Ascending aorta (tissue), 2 donors: ENCODE measurements at regions of chr6 and their contacts with region 1.

Region 1: DNA sequence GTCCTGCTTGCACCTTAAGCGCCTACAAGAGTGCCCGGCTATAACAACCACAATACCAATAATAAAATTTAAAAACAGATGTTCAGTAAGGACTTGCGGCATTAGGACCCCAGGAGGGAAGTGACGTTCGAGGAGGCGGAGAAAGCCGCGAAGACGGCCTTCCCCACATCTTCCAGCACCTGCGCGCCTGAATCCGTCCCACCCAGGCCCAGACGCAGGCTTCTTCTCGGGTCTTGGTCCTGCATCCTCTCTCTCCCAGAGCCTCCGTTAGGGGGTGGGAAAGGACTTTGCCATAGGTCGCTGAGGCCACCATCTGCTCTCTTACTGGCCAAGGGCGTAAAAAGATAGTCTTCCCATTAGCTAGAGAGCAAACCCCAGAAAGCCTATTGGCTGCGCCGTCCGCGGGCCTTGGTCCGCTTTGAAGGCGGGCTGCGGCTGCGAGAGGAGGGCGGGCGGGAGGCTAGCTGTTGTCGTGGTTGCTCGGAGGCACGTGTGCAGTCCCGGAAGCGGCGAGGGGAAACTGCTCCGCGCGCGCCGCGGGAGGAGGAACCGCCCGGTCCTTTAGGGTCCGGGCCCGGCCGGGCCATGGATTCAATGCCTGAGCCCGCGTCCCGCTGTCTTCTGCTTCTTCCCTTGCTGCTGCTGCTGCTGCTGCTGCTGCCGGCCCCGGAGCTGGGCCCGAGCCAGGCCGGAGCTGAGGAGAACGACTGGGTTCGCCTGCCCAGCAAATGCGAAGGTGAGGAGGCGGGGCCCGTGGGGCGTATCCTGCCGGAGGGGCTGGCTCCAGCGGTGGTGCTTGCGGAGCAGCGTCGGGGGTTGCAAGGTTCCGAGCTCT is at the start of gene CNPY3:
- DNase-seq: peak; percentile 86 to 97
- H3K4me3 ChIP-seq: peak within 1 kb of the TSS; percentile 69 to 79
- H3K27ac ChIP-seq: peak within 1 kb of the TSS; percentile 81 to 87
- H3K4me1 ChIP-seq: peaks cover 0 to 12% of the 10 kb centered on the region in 2 donors
- H3K27me3 ChIP-seq: no peaks in the 10 kb centered on the region
- CTCF ChIP-seq: no peak
- total RNA-seq, gene CNPY3: 49.6 TPM

Region 2: DNA sequence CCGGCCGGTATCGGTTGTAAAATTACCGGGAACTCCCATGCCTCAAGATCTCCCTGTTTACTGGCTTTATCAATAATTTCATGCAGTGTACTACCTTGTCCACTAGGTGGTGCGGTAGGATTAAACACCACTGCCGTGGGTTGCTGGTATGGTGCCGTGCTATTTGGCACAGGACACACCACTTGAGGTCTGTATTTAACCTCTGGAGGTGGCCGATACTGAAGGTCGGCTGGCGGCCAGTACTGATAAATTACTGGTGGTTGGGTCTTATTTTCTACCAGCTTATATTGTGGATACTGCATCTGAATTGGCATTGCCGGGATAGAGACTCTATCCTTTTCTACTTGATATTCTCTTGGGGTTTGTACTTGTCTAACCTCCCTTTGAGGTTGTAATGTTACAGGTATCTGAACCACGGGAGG is 27.7 kb before region 1 on chr6:
- intact Hi-C with region 1: loop called (anchors 2 kb)
- DNase-seq: peak in 1 of 2 donors; percentile 87
- H3K4me3 ChIP-seq: no peak overlapping the region
- H3K27ac ChIP-seq: no peak overlapping the region
- H3K4me1 ChIP-seq: peaks cover 0 to 18% of the 10 kb centered on the region in 2 donors
- H3K27me3 ChIP-seq: no peaks in the 10 kb centered on the region
- CTCF ChIP-seq: peak; percentile 83 to 92 (median 88)

Region 3: GRCh38 chr6:42960243-42961019 is 31.2 kb after region 1 on chr6 and contains the start of gene GNMT:
- intact Hi-C with region 1: loop called (anchors 2 kb)
- DNase-seq: peak in 1 of 2 donors; percentile 71
- H3K4me3 ChIP-seq: peak within 1 kb of the TSS; percentile 58 to 67
- H3K27ac ChIP-seq: no peak within 1 kb of the TSS
- H3K4me1 ChIP-seq: peaks cover 0 to 7% of the 10 kb centered on the region in 2 donors
- H3K27me3 ChIP-seq: no peaks in the 10 kb centered on the region
- CTCF ChIP-seq: no peak
- total RNA-seq, gene GNMT: not detected

Region 4: GRCh38 chr6:42978839-42979522 is 49.8 kb after region 1 on chr6 and contains the start of gene PEX6:
- intact Hi-C with region 1: loop called (anchors 2 kb)
- DNase-seq: peak; percentile 37 to 94
- H3K4me3 ChIP-seq: peak within 1 kb of the TSS; percentile 84 to 92
- H3K27ac ChIP-seq: peak within 1 kb of the TSS; percentile 85 to 90
- H3K4me1 ChIP-seq: peaks cover 0 to 27% of the 10 kb centered on the region in 2 donors
- H3K27me3 ChIP-seq: no peaks in the 10 kb centered on the region
- CTCF ChIP-seq: no peak
- total RNA-seq, gene PEX6: 8.9 TPM